Psoas muscle (tissue), 8 donors: ENCODE measurements at regions of chrX and their contacts with region 1.

Region 1: DNA sequence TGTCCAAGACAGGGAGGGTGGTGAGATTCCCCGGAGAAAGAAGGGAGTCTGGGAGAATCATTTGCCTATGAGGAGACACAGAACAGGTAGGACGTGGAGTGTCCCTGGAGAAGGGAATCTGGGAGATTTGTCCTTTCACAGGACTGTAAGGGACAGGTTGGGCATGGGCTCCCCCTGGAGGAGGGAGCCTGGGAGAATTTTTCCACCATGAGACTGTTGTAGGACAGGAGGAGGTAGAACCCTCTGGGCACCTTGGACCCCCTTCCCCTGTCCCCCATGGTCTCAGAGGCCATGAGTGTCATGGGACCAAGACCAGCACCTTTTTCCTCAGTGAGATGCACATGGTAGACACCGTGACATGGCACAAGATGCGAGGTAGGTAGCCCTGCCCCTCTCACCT is 2.8 kb downstream of the PORCN start:
- DNase-seq: no peak
- ATAC-seq: no peak
- H3K4me3 ChIP-seq: no peak overlapping the region
- H3K27ac ChIP-seq: no peak overlapping the region
- H3K4me1 ChIP-seq: no peaks in the 10 kb centered on the region
- H3K27me3 ChIP-seq: peaks cover 0 to 5% (median 0%) of the 10 kb centered on the region in 3 donors
- CTCF ChIP-seq: no peak

Region 2: DNA sequence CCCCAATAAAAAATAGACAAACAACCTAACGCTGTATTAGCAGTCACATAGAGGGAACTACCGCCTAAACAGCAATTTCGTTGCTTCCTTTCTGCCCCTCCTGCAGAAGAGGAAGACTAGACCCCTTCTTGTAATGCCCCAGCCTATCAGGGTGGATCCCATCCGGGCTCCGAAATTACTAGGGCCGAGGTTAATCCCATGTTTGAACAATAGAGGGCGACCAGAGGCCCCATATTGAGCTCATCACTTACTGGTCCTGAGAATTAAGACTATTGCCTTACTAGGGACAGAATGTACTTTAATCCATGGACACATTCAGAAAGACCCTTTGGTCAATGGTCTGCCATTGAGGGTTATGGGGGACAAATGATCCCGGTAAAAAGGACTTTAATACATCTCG is 428.3 kb before region 1 on chrX:
- intact Hi-C with region 1: loop called in 1 of 2 experiments (anchors 10 kb)
- DNase-seq: no peak
- ATAC-seq: peak in 1 of 4 donors; percentile 66
- H3K4me3 ChIP-seq: no peak overlapping the region
- H3K27ac ChIP-seq: no peak overlapping the region
- H3K4me1 ChIP-seq: no peaks in the 10 kb centered on the region
- H3K27me3 ChIP-seq: peaks cover 0 to 4% (median 0%) of the 10 kb centered on the region in 3 donors
- CTCF ChIP-seq: peak; percentile 39

Region 3: GRCh38 chrX:48493890-48494364 is 17.6 kb before region 1 on chrX:
- intact Hi-C with region 1: no loop called
- DNase-seq: no peak
- ATAC-seq: no peak
- H3K4me3 ChIP-seq: no peak overlapping the region
- H3K27ac ChIP-seq: no peak overlapping the region
- H3K4me1 ChIP-seq: no peaks in the 10 kb centered on the region
- H3K27me3 ChIP-seq: peaks cover 0 to 7% (median 0%) of the 10 kb centered on the region in 3 donors
- CTCF ChIP-seq: no peak